Posterior cingulate gyrus (tissue), 11 donors: ENCODE measurements at regions of chr18 and their contacts with region 1.

Region 1: DNA sequence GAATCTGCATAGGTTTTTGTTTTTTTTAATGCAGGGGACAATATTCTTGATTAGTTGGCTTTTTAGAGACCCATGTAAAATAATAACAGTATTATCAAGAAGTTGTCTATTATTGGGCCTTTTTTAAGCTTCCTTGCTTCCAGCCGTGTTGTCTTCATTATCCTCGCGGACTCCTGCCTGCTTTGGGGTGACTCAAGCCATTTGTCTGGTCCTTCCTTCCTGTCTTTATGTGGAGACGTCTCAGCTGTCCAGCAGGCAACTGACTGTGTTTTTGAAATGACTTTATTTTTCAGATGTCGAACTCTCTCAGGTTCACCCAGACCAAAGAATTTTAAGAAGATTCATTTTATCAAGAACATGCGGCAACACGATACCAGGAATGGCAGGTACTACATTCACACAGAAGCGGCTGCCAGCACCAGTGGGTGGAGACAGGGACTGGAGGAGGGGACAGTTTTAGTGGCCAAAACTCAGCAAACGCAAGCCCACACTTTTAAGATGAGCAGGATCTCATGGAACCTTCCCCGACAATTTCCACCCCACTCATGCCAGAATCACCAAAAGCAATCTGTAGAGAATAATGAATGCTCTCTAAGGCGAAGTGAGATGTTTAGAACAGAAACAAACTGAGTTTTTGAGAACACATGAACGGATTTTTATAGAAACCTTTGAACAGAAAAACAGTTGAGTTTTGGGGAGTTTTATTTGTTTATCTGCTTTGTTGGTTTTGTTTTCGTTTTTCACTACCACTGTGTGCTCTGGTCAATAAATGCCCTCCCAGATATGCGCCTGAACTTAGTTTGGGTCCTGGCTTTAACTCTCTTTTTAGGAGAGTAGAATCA is 59.1 kb downstream of the CABLES1 start:
- DNase-seq: peak in 3 of 10 donors; percentile 34 to 82 (median 51)

Region 2: GRCh38 chr18:22174341-22175145 is 1019.8 kb before region 1 on chr18:
- intact Hi-C with region 1: no loop called
- DNase-seq: no peak

Region 3: GRCh38 chr18:22813648-22814328 is 380.6 kb before region 1 on chr18:
- intact Hi-C with region 1: no loop called
- DNase-seq: no peak

Region 4: DNA sequence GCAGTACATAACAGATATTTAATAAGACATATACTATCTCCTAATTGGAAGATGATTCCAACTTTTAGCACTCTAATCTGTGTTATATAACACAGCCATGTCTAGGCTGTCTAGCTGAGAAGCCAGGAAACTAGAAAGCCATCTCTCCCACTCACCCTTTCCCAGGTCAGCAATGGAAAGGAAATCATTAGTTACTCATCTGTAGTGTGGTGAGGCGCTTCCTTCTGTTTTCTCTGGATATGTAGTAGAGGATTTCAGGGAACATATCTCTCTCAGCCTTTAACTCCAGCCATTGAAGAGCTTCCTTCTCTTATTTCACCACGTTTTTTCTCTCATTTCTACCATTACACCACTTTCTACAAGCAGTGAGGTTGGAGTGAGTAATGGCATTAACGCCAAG is 241.9 kb before region 1 on chr18:
- intact Hi-C with region 1: no loop called
- DNase-seq: no peak

Region 5: DNA sequence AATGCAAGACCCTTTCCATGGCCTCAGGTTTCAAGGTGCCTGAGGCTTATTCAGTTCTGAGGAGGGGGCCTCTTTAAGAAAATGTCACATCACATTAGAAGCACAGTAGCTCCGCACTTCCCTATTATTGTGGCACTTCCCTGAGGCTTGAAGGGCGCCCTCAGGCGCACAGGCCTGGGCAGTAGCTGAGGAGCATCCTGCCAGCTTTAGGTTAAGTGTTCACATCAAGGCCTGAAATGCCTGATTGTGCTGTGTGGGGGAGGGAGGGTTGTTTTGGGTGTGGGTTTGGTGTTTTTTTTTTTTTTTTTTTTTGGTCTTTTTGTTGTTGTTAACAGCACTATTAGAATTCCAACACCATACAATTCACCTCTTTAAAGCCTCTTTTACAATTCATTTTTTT is 48.8 kb after region 1 on chr18:
- intact Hi-C with region 1: loop called (anchors 10 kb)
- DNase-seq: peak in 3 of 10 donors; percentile 17 to 41 (median 31)

Region 6: GRCh38 chr18:25190472-25190871 is 1996.1 kb after region 1 on chr18:
- intact Hi-C with region 1: no loop called
- DNase-seq: no peak